Posterior cingulate gyrus (tissue), 11 donors: ENCODE measurements at regions of chr1 and their contacts with region 1.

Region 1: GRCh38 chr1:77900687-77901293 is 12.4 kb downstream of the NEXN start:
- DNase-seq: peak in 3 of 10 donors; percentile 15 to 38 (median 25)

Region 2: DNA sequence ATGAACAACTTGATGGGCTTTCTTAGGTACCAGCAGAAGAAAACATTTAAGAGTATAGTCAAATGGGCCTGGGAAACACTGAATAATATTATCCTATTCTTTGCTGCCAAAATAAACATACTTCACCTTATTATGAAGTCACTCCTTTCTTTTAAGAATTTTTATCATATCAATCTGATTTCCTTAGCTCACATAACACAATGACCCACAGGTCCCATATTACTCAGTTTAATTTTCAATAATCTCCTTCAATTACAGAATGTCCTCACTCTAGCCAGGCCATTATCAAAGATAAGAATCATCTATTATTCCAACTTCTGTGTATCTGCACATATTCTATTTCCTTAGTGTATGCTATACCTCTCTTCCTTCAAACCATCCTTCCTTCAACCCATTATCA is 744.6 kb before region 1 on chr1:
- intact Hi-C with region 1: loop called (anchors 5 kb)
- DNase-seq: no peak

Region 3: DNA sequence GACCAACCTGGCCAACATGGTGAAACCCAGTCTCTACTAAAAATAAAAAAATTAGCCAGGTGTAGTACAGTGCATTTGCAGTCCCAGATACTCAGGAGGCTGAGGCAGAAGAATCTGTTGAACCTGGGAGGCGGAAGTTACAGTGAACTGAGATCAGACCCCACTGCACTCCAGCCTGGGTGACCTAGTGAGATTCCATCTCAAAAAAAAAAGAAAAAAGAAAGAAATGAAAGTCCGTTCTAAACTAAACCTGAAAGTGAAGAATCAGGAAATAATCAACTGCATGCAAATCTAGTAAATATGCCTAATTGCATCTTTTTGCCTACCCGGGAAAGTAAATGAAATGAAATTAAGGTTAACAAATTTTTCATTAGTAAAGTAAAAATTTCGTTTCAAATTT is 317.9 kb before region 1 on chr1:
- intact Hi-C with region 1: no loop called
- DNase-seq: no peak